GM12878 (cell line): ENCODE measurements at regions of chr1 and their contacts with region 1.

Region 1: GRCh38 chr1:184805667-184806295 is 51.1 kb upstream of the EDEM3 start:
- DNase-seq: peak; percentile 55
- ATAC-seq: peak; percentile 99
- H3K4me3 ChIP-seq: no peak overlapping the region
- H3K27ac ChIP-seq: no peak overlapping the region
- H3K4me1 ChIP-seq: peaks cover 9% of the 10 kb centered on the region
- H3K27me3 ChIP-seq: no peaks in the 10 kb centered on the region
- CTCF ChIP-seq: peak; percentile 85 to 98 (median 87)
- EP300 ChIP-seq: no peak
- POLR2A ChIP-seq: no peak
- RAD21 ChIP-seq: peak; percentile 99

Region 2: GRCh38 chr1:184754476-184755225 is 51.1 kb before region 1 on chr1 and contains the start of gene EDEM3:
- CTCF ChIA-PET with region 1: interaction called, 10 read pairs
- POLR2A ChIA-PET with region 1: interaction called, 3 read pairs
- RAD21 ChIA-PET with region 1: interaction called, 5 read pairs
- SMC1A ChIA-PET with region 1: interaction called, 8 read pairs
- in situ Hi-C with region 1: no loop called
- intact Hi-C with region 1: no loop called
- DNase-seq: peak; percentile 97
- ATAC-seq: peak; percentile 95
- H3K4me3 ChIP-seq: peak within 1 kb of the TSS; percentile 82
- H3K27ac ChIP-seq: peak within 1 kb of the TSS; percentile 87
- H3K4me1 ChIP-seq: no peaks in the 10 kb centered on the region
- H3K27me3 ChIP-seq: no peaks in the 10 kb centered on the region
- CTCF ChIP-seq: no peak
- EP300 ChIP-seq: no peak
- POLR2A ChIP-seq: peak; percentile 95
- RAD21 ChIP-seq: no peak
- polyA plus RNA-seq, gene EDEM3: 6.4 to 9.2 TPM

Region 3: DNA sequence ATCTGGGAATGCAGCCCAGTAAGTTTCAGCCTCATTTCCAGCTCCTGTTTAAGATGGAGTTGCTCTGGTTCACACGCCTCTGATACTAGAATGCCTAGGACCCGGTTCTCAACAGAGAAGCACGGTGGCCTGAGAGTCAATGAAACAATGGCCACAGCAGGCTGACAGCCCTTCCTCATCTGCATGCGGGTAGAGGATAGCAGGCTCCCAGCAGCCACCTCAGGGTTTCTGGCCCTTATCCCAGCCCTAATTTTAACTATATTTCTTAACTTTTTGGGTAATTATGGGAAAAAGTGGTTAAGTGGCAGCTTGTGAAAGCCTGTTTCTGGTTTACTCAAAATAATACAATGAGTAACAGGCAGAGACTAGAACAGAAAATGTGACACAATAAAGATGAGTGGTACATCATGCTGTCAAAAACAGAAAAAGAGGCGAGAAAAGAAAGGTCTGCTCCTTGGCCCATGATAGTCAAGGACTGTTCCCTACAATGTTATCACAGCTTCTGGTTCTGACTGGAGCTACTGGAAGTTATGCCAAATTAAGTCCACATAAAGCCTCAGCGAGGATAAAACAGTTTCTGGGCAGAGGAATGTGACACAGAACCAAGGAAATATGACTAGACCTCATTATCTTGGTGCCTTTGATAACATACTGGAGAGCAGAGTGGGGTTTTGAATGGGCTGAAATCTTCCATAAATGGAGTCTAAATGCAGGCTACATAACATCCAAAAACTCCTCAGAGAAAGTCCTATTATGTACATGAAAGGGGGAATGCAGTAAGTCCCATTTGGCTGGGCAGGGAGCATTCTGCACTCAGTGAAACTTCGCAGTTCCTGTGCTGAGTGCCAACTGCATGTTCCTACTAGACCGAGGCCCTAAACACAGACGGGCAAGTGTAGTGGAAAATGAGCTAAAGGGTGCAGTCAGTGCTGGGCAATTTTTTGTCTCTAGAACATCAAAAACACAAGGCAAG is 76.4 kb after region 1 on chr1:
- CTCF ChIA-PET with region 1: interaction called, 7 read pairs
- POLR2A ChIA-PET with region 1: no interaction called
- RAD21 ChIA-PET with region 1: interaction called, 3 read pairs
- SMC1A ChIA-PET with region 1: interaction called, 3 read pairs
- in situ Hi-C with region 1: no loop called
- intact Hi-C with region 1: loop called (anchors 5 kb)
- DNase-seq: no peak
- ATAC-seq: peak; percentile 82
- H3K4me3 ChIP-seq: no peak overlapping the region
- H3K27ac ChIP-seq: peak overlapping the region; percentile 66
- H3K4me1 ChIP-seq: peaks cover 18% of the 10 kb centered on the region
- H3K27me3 ChIP-seq: no peaks in the 10 kb centered on the region
- CTCF ChIP-seq: no peak
- EP300 ChIP-seq: peak; percentile 48 to 52; a peak in 2 of 4 replicates
- POLR2A ChIP-seq: no peak
- RAD21 ChIP-seq: no peak

Region 4: DNA sequence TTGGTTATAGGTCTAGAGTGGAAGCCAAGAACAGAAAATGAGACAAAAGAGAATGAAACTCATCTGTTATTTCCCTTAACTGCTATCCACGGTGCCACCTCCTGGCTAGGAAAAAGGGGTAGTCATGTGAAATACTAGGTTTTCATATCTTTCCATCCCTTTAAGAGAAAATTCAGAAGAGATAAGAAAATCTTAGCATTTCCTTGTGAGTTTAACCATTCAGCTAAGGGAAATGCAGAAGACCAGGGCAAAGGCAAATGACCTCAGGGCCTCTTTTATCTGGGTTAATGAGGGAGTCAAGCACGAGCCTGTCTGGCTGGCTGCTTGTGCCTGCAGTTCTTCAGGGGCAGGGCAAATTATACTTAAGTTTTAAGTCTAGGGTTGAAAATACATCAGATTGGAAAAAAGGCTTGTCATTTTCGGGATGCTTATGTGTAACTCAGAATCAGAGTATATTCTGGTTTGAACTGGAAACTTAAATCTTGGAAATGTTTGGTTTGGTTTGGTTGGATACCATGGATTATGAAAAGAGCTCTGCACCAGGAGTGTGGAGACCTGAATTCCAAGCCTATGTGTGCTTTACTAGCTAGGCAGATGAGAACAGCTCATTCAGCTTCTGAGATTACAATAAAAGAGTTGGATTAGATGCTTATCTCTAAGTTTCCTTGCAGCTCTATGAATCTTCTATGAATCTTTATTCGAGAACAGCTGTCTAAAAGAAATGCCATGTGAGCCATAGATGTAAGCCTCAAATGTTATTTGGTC is 148.6 kb after region 1 on chr1:
- CTCF ChIA-PET with region 1: interaction called, 6 read pairs
- POLR2A ChIA-PET with region 1: no interaction called
- RAD21 ChIA-PET with region 1: no interaction called
- SMC1A ChIA-PET with region 1: interaction called, 11 read pairs
- in situ Hi-C with region 1: no loop called
- intact Hi-C with region 1: no loop called
- DNase-seq: no peak
- ATAC-seq: no peak
- H3K4me3 ChIP-seq: no peak overlapping the region
- H3K27ac ChIP-seq: no peak overlapping the region
- H3K4me1 ChIP-seq: no peaks in the 10 kb centered on the region
- H3K27me3 ChIP-seq: no peaks in the 10 kb centered on the region
- CTCF ChIP-seq: no peak
- EP300 ChIP-seq: no peak
- POLR2A ChIP-seq: no peak
- RAD21 ChIP-seq: no peak

Region 5: GRCh38 chr1:185156854-185157598 is 351.2 kb after region 1 on chr1 and contains the starts of genes SWT1 and TRMT1L:
- CTCF ChIA-PET with region 1: interaction called, 5 read pairs
- POLR2A ChIA-PET with region 1: no interaction called
- RAD21 ChIA-PET with region 1: no interaction called
- SMC1A ChIA-PET with region 1: no interaction called
- in situ Hi-C with region 1: loop called (anchors 5 kb)
- intact Hi-C with region 1: no loop called
- DNase-seq: peak; percentile 93
- ATAC-seq: peak; percentile 92
- H3K4me3 ChIP-seq: peak within 1 kb of the TSS; percentile 94
- H3K27ac ChIP-seq: peak within 1 kb of the TSS; percentile 94
- H3K4me1 ChIP-seq: peaks cover 18% of the 10 kb centered on the region; the same call in 1 of the 2 replicates
- H3K27me3 ChIP-seq: no peaks in the 10 kb centered on the region
- CTCF ChIP-seq: no peak
- EP300 ChIP-seq: no peak
- POLR2A ChIP-seq: peak; percentile 89
- RAD21 ChIP-seq: no peak
- polyA plus RNA-seq, gene SWT1: 1.0 to 1.4 TPM
- polyA plus RNA-seq, gene TRMT1L: 3.5 to 4.1 TPM

Region 6: DNA sequence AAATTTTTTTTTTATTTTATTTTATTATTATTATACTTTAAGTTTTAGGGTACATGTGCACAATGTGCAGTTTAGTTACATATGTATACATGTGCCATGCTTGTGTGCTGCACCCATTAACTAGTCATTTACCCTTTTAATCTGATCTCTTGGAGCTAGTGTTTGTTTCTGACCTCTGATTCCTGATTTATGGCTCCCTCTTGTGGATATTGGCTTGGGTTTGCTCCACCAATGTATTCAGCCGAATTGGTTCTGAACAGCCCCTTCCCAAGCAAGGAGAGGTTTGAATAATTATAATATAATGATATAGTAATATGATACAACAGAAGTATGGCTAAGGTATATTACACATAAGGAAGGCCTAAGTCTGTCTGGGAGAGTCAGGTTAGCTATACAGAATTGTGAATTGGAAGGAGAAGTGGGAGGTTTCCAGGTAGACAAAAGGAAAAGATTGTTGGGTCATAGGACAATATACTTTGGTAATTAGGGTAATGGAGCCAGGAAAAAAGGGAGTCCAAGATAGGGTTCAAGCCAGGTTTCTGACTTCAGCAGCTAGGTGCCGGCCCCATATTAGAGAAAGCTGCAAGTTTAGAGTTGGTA is 875.4 kb after region 1 on chr1:
- CTCF ChIA-PET with region 1: interaction called, 17 read pairs
- POLR2A ChIA-PET with region 1: no interaction called
- RAD21 ChIA-PET with region 1: interaction called, 4 read pairs
- SMC1A ChIA-PET with region 1: no interaction called
- in situ Hi-C with region 1: no loop called
- intact Hi-C with region 1: loop called (anchors 10 kb)
- DNase-seq: peak; percentile 21
- ATAC-seq: peak; percentile 89
- H3K4me3 ChIP-seq: no peak overlapping the region
- H3K27ac ChIP-seq: no peak overlapping the region
- H3K4me1 ChIP-seq: no peaks in the 10 kb centered on the region
- H3K27me3 ChIP-seq: no peaks in the 10 kb centered on the region
- CTCF ChIP-seq: peak; percentile 43 to 65 (median 49); a peak in 4 of 6 replicates
- EP300 ChIP-seq: no peak
- POLR2A ChIP-seq: no peak
- RAD21 ChIP-seq: peak; percentile 74